Ovary (tissue), 10 donors: ENCODE measurements at regions of chr6 and their contacts with region 1.

Region 1: GRCh38 chr6:96659084-96659845 is 96.3 kb downstream of the FHL5 start:
- DNase-seq: no peak
- H3K4me3 ChIP-seq: no peak overlapping the region
- H3K27ac ChIP-seq: no peak overlapping the region
- H3K4me1 ChIP-seq: no peaks in the 10 kb centered on the region
- H3K27me3 ChIP-seq: no peaks in the 10 kb centered on the region
- CTCF ChIP-seq: no peak
- EP300 ChIP-seq: no peak
- POLR2A ChIP-seq: no peak

Region 2: GRCh38 chr6:97697456-97697855 is 1038.2 kb after region 1 on chr6:
- intact Hi-C with region 1: loop called in 1 of 4 experiments (anchors 5 kb)
- DNase-seq: no peak
- H3K4me3 ChIP-seq: no peak overlapping the region
- H3K27ac ChIP-seq: no peak overlapping the region
- H3K4me1 ChIP-seq: no peaks in the 10 kb centered on the region
- H3K27me3 ChIP-seq: no peaks in the 10 kb centered on the region
- CTCF ChIP-seq: no peak
- EP300 ChIP-seq: no peak
- POLR2A ChIP-seq: no peak